Breast epithelium (tissue), 4 donors: ENCODE measurements at regions of chr19 and their contacts with region 1.

Region 1: DNA sequence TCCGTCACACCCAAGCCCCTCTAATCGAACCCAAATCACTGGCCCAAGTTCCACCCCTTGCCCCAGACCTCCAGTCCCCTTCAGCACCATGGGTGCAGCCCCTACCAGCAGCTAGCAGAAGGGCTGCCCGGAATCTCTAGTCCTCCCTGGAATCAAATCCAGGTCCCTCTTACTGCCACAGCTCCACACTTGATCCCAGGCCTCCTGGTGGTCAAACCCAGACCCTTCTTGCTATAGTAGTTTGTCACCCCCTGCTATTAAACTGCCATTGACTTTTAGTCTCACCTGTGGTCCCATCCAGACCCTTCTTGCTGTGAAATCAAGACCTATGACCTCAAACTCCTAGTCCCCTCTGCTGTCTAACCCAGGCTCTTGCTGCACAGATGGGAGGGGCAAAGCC is 8.7 kb downstream of the HIPK4 start:
- DNase-seq: no peak
- H3K4me3 ChIP-seq: no peak overlapping the region
- H3K27ac ChIP-seq: no peak overlapping the region
- H3K4me1 ChIP-seq: no peaks in the 10 kb centered on the region
- H3K27me3 ChIP-seq: no peaks in the 10 kb centered on the region
- CTCF ChIP-seq: no peak
- POLR2A ChIP-seq: no peak

Region 2: GRCh38 chr19:40335855-40336600 is 45.3 kb before region 1 on chr19:
- intact Hi-C with region 1: loop called (anchors 1 kb)
- DNase-seq: no peak
- H3K4me3 ChIP-seq: no peak overlapping the region
- H3K27ac ChIP-seq: no peak overlapping the region
- H3K4me1 ChIP-seq: no peaks in the 10 kb centered on the region
- H3K27me3 ChIP-seq: no peaks in the 10 kb centered on the region
- CTCF ChIP-seq: no peak
- POLR2A ChIP-seq: no peak

Region 3: GRCh38 chr19:40365613-40366401 is 15.5 kb before region 1 on chr19:
- intact Hi-C with region 1: no loop called
- DNase-seq: peak in 1 of 2 donors; percentile 37
- H3K4me3 ChIP-seq: peak overlapping the region; percentile 38 to 63 (median 40)
- H3K27ac ChIP-seq: peak overlapping the region; percentile 29 to 68
- H3K4me1 ChIP-seq: no peaks in the 10 kb centered on the region
- H3K27me3 ChIP-seq: no peaks in the 10 kb centered on the region
- CTCF ChIP-seq: no peak
- POLR2A ChIP-seq: no peak

Region 4: DNA sequence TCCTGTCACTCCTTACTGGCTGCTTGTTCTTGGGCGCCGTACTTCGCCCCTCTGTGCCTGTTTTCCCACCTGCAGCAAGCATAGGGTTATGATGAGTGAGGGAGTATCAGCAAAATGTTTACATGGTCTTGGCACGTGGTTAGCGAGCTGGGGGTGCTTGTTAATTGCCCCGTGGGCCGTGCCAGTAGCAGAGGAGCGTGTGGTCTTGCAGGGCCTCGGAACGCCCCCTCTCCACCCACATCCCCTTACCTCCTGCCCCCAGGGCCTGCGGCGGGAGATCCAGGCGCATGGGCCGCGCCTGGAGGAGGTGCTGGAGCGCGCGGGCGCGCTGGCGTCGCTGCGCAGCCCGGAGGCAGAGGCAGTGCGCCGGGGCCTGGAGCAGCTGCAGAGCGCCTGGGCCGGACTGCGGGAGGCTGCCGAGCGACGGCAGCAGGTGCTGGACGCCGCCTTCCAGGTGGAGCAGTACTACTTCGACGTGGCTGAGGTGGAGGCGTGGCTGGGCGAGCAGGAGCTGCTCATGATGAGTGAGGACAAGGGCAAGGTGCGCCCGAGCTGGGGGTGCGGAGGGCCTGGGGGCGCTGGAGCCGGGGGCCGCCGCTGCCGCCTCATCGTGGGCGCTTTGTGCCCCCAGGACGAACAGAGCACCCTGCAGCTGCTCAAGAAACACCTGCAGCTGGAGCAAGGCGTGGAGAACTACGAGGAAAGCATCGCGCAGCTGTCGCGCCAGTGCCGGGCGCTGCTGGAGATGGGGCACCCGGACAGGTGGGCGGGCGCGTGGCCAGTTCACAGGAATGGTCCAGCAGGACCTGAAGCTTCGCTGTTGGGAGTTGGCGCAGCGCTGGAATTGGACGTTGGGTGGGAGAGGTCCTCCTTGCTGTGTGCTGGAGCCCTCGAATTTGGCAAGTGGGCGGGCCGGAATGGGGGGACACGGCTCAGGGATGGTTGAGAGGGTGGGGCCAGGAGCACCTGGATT is 172.8 kb after region 1 on chr19:
- intact Hi-C with region 1: no loop called
- DNase-seq: no peak
- H3K4me3 ChIP-seq: no peak overlapping the region
- H3K27ac ChIP-seq: no peak overlapping the region
- H3K4me1 ChIP-seq: no peaks in the 10 kb centered on the region
- H3K27me3 ChIP-seq: peaks cover 0 to 15% of the 10 kb centered on the region in 2 donors
- CTCF ChIP-seq: no peak
- POLR2A ChIP-seq: no peak